ENCODE measurements at regions of chr10 and their contacts with region 1.

Region 1: DNA sequence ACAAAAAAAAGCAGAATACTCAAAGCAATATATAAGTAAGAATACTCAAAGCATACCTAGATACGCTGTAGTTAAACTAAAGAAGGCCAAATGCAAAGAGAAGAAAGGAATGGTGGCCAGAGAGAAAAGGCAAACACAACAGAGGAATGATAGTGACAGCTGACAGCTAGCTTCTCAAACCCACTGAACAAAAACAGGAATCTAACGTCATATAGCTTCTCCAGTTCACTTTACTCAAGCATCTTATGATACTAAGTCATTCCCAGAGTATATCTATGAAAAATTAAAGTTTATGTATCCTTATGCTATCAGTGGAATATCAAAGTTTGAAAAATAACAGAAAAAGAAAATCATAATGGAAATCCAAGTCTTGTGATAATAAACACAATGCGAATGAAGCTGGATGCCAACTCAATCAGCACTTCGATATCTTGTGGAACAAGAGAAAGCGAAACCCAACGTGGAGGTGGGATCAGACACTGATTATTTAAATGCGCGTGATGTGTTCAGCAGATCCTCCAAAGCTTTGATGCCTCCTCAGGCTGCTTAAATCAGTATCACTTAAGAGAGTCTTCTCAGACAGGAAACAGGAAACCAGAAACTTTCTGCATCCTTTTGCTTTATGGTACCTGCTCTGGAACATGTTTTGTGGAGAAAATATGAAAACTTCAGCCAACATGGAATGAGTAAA is 102.8 kb downstream of the PIP4K2A start:
- DNase-seq: peak; percentile 72
- H3K4me3 Mint-ChIP-seq: peak overlapping the region; percentile 38
- H3K27ac Mint-ChIP-seq: peak overlapping the region; percentile 21
- H3K4me1 Mint-ChIP-seq: peaks cover 90% of the 10 kb centered on the region
- H3K27me3 Mint-ChIP-seq: no peaks in the 10 kb centered on the region

Region 2: DNA sequence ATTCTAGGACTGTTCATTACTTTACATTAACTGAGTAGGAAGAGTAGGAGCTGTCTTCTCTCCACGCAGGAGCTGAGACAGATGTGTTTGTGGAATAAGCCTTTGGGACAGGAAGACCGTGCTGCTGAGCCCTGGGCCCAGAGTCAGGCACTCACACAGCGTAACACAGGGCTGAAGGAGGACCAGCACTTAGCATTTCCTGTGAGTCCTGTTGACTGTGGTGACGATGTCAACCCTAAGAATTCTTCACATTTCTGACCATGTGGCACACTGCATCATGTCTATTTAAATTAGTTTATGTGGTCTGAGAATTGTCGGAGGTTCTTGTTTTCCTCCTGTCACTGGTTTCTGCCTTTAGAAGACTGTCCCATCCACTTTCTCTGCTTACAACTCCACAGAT is 14.4 kb before region 1 on chr10:
- intact Hi-C with region 1: loop called (anchors 1 kb)
- DNase-seq: no peak
- H3K4me3 Mint-ChIP-seq: no peak overlapping the region
- H3K27ac Mint-ChIP-seq: peak overlapping the region; percentile 45
- H3K4me1 Mint-ChIP-seq: peaks cover 55% of the 10 kb centered on the region
- H3K27me3 Mint-ChIP-seq: no peaks in the 10 kb centered on the region